Naive thymus-derived CD4-positive, alpha-beta T cell (primary cell): ENCODE measurements at regions of chr6 and their contacts with region 1.

Region 1: DNA sequence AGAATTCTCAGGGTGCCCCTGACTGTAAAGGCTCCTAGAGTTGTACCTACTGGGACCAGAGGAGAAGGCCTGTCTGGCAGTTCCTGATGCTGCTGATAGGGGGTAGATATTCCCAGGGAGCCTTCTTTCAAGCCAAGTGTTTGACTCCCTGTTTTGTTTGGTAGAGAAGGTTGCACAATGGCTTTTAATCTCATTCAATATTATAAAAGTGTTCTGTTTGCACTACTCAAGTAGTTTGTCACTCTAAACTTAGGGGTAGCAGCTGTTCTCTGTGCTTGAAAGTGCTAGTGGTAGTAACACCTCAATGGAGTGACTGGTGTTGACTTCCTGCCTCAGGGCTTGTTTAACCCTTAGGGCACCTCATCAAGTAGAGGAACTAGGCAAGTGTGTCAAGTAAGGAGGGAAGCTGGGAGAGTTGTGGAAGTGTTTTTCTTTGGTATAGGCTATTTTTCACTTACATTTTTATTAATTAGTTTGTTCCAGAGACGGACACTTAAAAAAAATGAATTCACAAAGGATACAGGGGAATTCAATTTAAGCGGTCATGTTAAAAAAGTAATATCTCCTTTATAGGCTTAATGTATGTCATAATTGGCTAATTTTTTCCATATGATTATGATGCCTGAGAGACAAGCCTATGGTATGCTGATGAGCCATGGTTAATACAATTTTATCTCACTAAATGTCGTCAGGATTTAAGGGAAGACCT is 38.1 kb downstream of the BICRAL start:
- DNase-seq: peak in 7 of 9 donors; percentile 15 to 51 (median 42)
- ATAC-seq: peak; percentile 76
- H3K4me3 ChIP-seq: no peak overlapping the region
- H3K4me3 Mint-ChIP-seq: peak overlapping the region in 6 of 10 donors; percentile 6 to 55 (median 36)
- H3K27ac ChIP-seq: no peak overlapping the region
- H3K27ac Mint-ChIP-seq: peak overlapping the region; percentile 23 to 90 (median 73)
- H3K4me1 ChIP-seq: peaks cover 0 to 6% of the 10 kb centered on the region in 2 donors
- H3K4me1 Mint-ChIP-seq: peaks cover 10 to 43% (median 30%) of the 10 kb centered on the region in 7 donors
- H3K27me3 ChIP-seq: no peaks in the 10 kb centered on the region
- H3K27me3 Mint-ChIP-seq: no peaks in the 10 kb centered on the region

Region 2: DNA sequence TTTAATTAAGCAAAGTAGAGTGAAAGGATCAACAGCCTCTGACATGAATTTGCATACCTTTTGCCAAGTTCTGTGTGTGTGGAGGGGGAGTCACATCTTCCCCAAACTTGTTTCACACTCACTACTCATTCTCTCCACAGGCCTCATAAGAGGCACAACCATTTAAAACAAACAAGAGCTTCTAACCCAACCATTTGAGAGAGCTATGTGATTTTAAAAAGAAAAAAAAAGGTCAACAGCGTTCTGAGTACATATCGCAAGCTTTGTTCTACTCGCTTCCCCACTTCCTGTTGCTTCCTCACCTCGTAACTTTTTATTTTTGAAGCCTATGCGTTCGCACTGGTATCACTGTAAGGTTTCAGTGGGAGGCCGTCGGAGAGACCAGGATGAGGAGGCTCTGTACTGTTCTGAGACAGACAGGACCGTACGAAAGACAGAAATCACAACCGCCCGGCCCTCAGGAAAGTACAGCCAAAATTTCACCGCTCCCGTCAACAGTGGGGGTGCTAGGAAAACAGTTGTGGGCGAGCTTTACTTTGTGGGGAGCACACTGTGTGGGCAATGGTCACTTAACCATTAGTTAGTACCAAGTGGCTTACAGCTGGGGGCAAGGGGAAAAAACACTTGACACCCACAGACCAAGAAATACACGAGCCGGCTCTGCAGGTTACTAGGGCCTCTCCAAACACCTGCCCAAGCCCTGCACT is 429.6 kb before region 1 on chr6:
- CTCF ChIA-PET with region 1: no interaction called
- POLR2A ChIA-PET with region 1: no interaction called
- intact Hi-C with region 1: no loop called
- DNase-seq: peak in 8 of 9 donors; percentile 69 to 90 (median 82)
- ATAC-seq: peak; percentile 88
- H3K4me3 ChIP-seq: peak overlapping the region; percentile 50
- H3K4me3 Mint-ChIP-seq: peak overlapping the region; percentile 71 to 87 (median 84)
- H3K27ac ChIP-seq: peak overlapping the region; percentile 85
- H3K27ac Mint-ChIP-seq: peak overlapping the region; percentile 97 to 100 (median 99)
- H3K4me1 ChIP-seq: peaks cover 89% of the 10 kb centered on the region in 2 donors
- H3K4me1 Mint-ChIP-seq: peaks cover 75 to 100% (median 96%) of the 10 kb centered on the region in 7 donors
- H3K27me3 ChIP-seq: no peaks in the 10 kb centered on the region
- H3K27me3 Mint-ChIP-seq: no peaks in the 10 kb centered on the region

Region 3: DNA sequence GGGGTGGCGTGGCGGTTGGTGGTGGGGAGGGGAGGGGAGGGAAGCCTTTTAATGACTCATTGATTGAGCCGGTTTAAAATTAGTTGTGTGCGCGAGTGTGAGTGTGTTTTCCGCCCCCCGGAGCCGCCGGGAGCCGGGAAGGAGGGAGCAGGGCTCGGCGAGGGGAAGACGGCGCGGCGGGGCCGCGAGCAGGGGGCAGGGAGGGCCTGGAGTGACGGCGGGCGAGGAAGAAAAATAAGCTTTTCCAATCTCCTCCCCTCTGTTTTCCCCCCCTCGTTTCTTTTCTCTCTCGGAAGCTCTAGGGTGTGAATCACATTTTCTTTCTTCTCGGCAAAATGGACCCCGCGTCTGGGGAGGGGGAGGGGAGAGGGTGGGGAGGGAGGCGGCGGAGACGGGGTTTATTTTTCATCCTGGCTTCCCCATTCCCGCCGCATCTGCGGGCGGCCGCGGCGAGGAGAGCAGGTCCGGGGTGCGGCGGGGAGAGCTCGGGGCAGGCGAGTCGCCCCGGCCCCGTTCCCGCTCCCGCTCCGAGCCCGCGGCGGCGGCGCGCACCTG is 37.3 kb before region 1 on chr6:
- CTCF ChIA-PET with region 1: interaction called, 3 read pairs
- POLR2A ChIA-PET with region 1: interaction called, 4 read pairs
- intact Hi-C with region 1: loop called in 1 of 2 experiments (anchors 2 kb)
- DNase-seq: peak in 8 of 9 donors; percentile 65 to 88 (median 82)
- ATAC-seq: peak; percentile 75
- H3K4me3 ChIP-seq: peak overlapping the region; percentile 89
- H3K4me3 Mint-ChIP-seq: peak overlapping the region in 8 of 10 donors; percentile 89 to 100 (median 98)
- H3K27ac ChIP-seq: peak overlapping the region; percentile 100
- H3K27ac Mint-ChIP-seq: peak overlapping the region in 5 of 9 donors; percentile 99 to 100 (median 100)
- H3K4me1 ChIP-seq: peaks cover 36 to 45% of the 10 kb centered on the region in 2 donors
- H3K4me1 Mint-ChIP-seq: peaks cover under 1 to 35% (median 30%) of the 10 kb centered on the region in 7 donors
- H3K27me3 ChIP-seq: no peaks in the 10 kb centered on the region
- H3K27me3 Mint-ChIP-seq: no peaks in the 10 kb centered on the region